ENCODE measurements at regions of chr17 and their contacts with region 1.

Region 1: GRCh38 chr17:17356149-17356930 is 53.2 kb downstream of the NT5M start:
- DNase-seq: peak; percentile 72 to 85
- ATAC-seq: peak; percentile 82 to 93 (median 82)
- H3K4me3 ChIP-seq: no peak overlapping the region
- H3K27ac ChIP-seq: no peak overlapping the region
- H3K4me1 ChIP-seq: peaks cover 9% of the 10 kb centered on the region
- H3K27me3 ChIP-seq: no peaks in the 10 kb centered on the region
- CTCF ChIP-seq: peak; percentile 99

Region 2: DNA sequence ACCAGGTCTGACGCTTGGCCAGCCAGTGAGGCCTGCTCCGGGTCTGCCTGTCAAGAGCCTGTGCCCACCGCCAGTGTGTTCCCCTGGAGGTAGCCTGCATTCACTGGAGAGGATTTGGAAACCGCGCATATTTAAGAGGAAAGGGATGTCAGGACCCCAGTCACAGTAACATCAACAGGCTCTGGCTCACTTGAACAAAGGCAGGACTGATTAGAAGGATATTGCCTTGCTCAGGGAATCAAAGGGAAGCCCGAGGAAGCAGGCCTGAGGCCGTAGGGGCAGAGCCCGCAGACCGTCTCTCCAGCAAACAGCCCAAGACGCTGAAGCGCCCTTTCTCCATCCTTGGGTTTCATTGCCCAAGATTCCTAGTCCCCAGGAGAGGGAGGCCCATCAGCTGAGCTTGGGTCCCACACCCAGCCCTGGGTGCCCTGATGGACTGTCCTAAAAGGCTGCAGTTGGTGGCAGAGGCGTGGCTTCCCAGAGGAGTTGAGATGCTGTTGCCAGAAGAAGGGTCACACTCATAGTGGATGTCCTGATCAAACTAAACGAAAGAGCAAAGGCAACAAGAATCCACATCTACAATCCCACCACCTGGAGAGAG is 30.0 kb before region 1 on chr17:
- intact Hi-C with region 1: no loop called
- DNase-seq: no peak
- ATAC-seq: no peak
- H3K4me3 ChIP-seq: no peak overlapping the region
- H3K27ac ChIP-seq: no peak overlapping the region
- H3K4me1 ChIP-seq: peaks cover 6% of the 10 kb centered on the region
- H3K27me3 ChIP-seq: no peaks in the 10 kb centered on the region
- CTCF ChIP-seq: no peak

Region 3: DNA sequence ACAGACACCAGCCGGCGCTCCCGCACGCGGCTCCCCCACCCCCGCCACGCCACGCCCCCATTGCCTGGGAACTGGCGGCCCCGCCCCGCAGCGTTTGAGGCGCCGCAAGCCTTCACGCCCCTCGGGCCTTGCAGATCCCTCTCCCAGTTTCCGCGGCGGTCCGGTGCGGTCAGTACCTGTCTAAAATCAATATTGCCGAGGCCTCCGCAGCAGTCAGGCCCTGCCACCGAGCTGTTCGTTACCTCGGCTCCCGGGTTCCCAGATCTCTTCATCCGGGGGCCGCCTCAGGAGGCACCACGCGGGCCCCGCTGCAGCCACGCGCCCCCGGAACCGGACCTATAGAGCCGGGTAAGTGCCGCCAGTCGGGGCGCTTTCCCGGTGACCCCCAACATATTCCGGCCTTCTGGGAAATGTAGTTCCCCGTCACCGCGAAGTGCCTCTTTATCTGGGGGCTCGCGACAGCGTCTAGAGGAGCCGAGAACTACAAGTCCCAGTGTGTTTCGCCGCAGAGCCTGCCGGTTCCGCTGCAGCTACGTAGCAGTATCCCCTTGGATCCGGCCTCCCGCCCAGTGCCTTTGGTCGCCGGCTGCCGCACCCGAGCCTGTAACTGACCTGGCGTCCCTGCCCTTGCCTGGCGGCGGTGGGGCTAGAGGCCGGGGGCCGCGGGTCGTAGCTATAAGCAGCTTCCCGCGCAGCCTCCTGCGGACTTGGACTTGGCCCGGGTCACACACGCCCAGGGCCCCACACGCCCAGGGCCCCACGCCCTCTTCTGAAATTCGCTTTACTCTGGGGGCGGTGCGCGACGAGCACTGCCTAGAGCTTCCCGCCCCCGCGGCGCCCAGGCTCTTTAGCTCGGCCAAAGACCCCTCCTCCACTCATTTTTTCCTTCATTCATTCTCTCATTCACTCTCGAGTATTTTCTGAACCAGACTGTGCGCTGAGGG is 235.3 kb after region 1 on chr17 and contains the start of gene PEMT:
- intact Hi-C with region 1: no loop called
- DNase-seq: peak; percentile 95 to 97
- ATAC-seq: peak; percentile 96 to 97 (median 96)
- H3K4me3 ChIP-seq: peak within 1 kb of the TSS; percentile 96
- H3K27ac ChIP-seq: peak within 1 kb of the TSS; percentile 92
- H3K4me1 ChIP-seq: peaks cover 16% of the 10 kb centered on the region
- H3K27me3 ChIP-seq: no peaks in the 10 kb centered on the region
- CTCF ChIP-seq: peak; percentile 5
- total RNA-seq, gene PEMT: 15.9 to 28.1 (median 21.7) TPM

Region 4: GRCh38 chr17:17613708-17614114 is 257.4 kb after region 1 on chr17:
- intact Hi-C with region 1: loop called in 1 of 2 experiments (anchors 2 kb)
- DNase-seq: no peak
- ATAC-seq: peak; percentile 78 to 86 (median 83)
- H3K4me3 ChIP-seq: no peak overlapping the region
- H3K27ac ChIP-seq: no peak overlapping the region
- H3K4me1 ChIP-seq: no peaks in the 10 kb centered on the region
- H3K27me3 ChIP-seq: no peaks in the 10 kb centered on the region
- CTCF ChIP-seq: peak; percentile 67

Region 5: DNA sequence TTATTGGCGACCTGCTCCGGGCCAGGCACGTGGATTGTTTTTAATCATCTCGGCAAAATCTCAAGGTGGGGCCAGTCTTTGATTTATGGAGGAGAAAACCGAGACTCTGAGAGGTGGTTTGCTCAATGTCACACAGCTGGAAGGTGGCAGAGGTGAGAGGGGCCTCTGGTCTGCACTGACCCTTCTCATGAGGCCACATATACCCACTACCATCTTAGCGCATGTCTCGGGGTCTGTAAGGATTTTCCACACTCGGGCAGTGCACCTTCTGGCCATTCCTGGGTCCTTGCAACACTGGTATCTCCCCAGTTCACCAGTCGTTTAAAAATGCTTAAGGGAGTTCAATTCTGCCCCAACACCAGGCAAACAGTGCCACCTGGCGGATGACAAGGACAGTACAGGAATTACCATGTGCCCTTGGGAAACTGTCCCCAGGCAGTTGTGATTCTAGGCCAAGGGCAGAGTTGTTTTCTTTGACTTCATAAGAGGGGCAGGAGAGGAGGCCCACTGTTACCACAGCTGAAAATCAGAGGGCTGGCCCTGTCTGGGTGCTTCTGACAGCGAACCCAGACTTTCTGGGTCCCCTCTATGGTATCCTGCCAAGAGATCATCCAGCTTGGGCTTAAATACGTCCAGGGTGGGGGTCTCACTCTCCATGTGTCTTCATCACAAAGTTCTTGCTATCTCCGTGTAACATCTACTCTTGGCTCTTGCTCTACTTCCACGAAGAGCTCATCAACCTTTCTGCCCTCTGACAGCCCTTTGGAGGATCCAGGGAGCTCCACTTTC is 285.5 kb after region 1 on chr17:
- intact Hi-C with region 1: loop called (anchors 1 to 2 kb)
- DNase-seq: peak; percentile 78 to 82
- ATAC-seq: peak; percentile 81 to 95 (median 90)
- H3K4me3 ChIP-seq: no peak overlapping the region
- H3K27ac ChIP-seq: no peak overlapping the region
- H3K4me1 ChIP-seq: no peaks in the 10 kb centered on the region
- H3K27me3 ChIP-seq: no peaks in the 10 kb centered on the region
- CTCF ChIP-seq: peak; percentile 91

Region 6: GRCh38 chr17:18004884-18005305 is 648.6 kb after region 1 on chr17:
- intact Hi-C with region 1: no loop called
- DNase-seq: peak; percentile 45 to 78
- ATAC-seq: peak; percentile 93 to 97 (median 94)
- H3K4me3 ChIP-seq: no peak overlapping the region
- H3K27ac ChIP-seq: peak overlapping the region; percentile 69
- H3K4me1 ChIP-seq: peaks cover 17% of the 10 kb centered on the region
- H3K27me3 ChIP-seq: no peaks in the 10 kb centered on the region
- CTCF ChIP-seq: peak; percentile 62

Measured in psoas muscle (tissue), 8 donors.